Right ventricle myocardium superior (tissue), 1 donor: ENCODE measurements at regions of chr12 and their contacts with region 1.

Region 1: GRCh38 chr12:15856097-15856982 is 25.8 kb upstream of the STRAP start:
- DNase-seq: no peak
- ATAC-seq: peak; percentile 80

Region 2: DNA sequence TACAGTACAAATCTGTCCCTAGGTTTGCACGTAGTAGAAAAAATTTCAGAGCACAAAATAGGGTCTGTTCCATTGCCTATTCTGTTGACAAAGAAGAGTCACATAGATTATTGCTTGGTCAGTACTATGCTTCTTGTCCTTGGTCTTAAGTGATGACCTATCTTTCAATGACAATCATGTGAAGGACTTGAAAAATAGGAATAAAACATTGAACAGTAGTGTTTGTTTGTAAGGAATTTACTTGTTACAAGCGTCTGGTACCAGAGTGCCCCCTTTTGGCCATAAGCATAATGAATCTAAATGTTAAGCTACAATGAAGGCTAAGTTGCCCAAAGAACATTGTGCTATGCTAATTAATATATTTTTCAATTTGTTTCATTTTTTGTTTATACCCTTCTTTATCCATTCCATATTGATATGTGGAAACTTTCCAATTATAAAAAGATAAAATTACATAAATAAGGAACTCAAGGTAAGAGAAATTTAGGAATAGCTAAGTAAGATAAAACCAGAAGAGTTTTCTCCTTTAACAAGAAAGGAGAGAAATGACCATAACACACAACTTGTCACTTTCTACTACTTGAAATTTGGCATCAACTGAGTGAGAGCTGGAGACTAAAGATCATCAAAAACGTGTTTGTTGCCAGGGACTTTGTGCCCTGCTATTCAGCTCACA is 271.8 kb before region 1 on chr12:
- intact Hi-C with region 1: loop called (anchors 2 kb)
- DNase-seq: no peak
- ATAC-seq: no peak

Region 3: GRCh38 chr12:15772405-15773018 is 83.8 kb before region 1 on chr12:
- intact Hi-C with region 1: loop called (anchors 10 kb)
- DNase-seq: no peak
- ATAC-seq: no peak

Region 4: DNA sequence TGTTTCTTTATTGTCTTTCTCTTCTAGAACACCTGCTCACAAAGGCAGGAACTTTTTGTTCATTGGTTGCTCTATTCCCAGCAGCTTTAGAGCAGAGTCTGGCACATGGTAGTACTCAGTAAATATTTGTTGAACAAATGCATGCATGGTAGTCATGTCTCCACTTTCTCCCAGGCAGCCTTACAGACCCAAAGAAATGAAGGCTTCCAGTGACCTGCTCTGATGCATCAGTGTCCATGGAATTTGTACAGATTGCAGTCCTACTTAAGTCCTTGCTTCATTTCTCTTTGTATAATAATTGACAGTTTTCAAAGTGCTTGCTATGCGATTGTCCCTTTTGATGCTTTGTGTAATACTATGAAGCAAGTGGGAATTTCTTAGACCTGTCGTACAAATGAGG is 174.4 kb after region 1 on chr12:
- intact Hi-C with region 1: no loop called
- DNase-seq: no peak
- ATAC-seq: no peak